ENCODE measurements at regions of chr10 and their contacts with region 1.

Region 1: DNA sequence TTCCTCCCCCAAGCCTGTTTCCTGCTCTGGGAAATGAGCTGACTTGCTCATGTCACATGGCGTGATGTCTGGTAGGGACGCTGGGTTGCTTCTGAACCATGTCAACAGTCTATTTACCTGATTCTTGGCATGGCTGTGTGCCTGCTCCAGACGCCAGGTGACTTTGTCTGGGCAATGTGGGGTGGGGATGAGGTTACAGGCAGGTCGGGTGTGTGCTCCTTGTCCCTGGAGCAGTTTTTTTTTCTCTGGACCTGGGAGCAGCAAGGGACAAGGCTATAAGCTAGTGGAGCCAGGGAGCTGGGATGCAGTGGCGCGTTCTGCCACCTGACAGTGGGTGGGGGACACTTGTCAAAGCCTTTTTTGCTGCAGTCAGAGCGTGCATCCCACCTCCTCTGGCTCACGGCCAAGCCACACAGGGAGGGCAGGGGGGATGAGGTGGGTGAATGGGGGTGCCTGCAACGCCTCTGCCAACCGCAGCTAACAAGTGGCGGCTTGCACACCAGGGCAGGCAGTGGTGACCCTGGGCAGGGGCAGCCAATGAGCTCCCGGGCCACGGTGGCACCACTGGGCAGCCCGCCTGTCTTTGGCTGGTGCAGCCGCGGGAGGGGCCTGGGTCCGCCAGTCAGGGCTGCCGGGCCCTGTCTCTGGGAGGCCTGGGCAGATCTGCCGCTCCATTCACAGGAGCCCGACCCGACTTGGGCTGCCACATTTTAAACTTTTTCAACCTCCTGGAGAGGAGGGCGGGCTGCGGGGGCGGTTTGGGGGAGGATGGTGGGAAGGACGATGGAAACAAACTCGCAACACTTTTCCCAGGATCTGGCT is 22.9 kb downstream of the DNAJB12 start:
- DNase-seq: peak; percentile 94 to 96
- ATAC-seq: peak; percentile 75 to 90 (median 79)
- H3K4me3 ChIP-seq: peak overlapping the region; percentile 14
- H3K4me3 Mint-ChIP-seq: peak overlapping the region; percentile 86
- H3K27ac ChIP-seq: peak overlapping the region; percentile 95
- H3K27ac Mint-ChIP-seq: peak overlapping the region; percentile 96 to 97
- H3K4me1 ChIP-seq: peaks cover 98% of the 10 kb centered on the region
- H3K4me1 Mint-ChIP-seq: peaks cover 79 to 92% of the 10 kb centered on the region in 2 donors
- H3K27me3 ChIP-seq: no peaks in the 10 kb centered on the region
- H3K27me3 Mint-ChIP-seq: no peaks in the 10 kb centered on the region
- CTCF ChIP-seq: no peak

Region 2: GRCh38 chr10:72083790-72084459 is 247.9 kb before region 1 on chr10:
- intact Hi-C with region 1: loop called (anchors 2 kb)
- DNase-seq: peak; percentile 37 to 84
- ATAC-seq: peak; percentile 23 to 29 (median 29)
- H3K4me3 ChIP-seq: no peak overlapping the region
- H3K4me3 Mint-ChIP-seq: peak overlapping the region; percentile 78
- H3K27ac ChIP-seq: peak overlapping the region; percentile 57
- H3K27ac Mint-ChIP-seq: peak overlapping the region; percentile 94 to 96
- H3K4me1 ChIP-seq: peaks cover 88% of the 10 kb centered on the region
- H3K4me1 Mint-ChIP-seq: peaks cover 72 to 80% of the 10 kb centered on the region in 2 donors
- H3K27me3 ChIP-seq: no peaks in the 10 kb centered on the region
- H3K27me3 Mint-ChIP-seq: peaks cover 0 to 3% of the 10 kb centered on the region in 2 donors
- CTCF ChIP-seq: no peak

Region 3: DNA sequence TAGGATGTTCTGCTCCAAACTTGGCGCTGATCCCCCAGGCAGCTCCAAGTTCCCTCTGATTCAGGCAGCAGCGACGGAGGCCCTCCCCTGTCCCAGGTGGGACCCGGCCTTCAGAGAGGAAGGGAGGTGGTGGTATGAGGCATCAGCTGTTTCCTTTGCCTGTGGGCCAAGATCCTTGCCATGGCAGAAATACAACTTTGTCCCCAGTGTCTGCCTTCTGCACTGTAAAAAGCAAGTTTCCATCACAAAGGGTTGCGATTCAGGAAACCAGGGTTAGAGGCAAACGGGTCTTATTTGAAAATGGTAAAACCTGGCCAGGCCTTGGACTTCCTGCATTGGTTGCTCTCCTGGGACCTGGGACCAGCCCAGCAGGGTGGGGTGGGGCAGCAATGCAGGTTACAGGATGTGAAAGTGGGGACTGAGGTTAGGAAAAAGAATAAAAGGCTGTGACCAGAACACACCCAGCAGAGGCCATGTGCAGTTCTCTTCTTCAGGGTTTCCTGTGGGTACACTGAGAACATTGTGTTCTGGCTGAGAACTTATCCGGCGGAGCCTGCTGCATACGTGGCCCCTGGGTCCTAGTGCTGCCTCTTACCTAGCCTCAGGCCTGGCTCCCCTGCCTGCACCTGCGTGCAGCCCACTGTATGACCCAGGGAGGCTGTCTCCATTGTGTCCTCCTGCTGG is 83.2 kb before region 1 on chr10:
- intact Hi-C with region 1: loop called (anchors 1 kb)
- DNase-seq: peak; percentile 58 to 88
- ATAC-seq: peak; percentile 90 to 95 (median 94)
- H3K4me3 ChIP-seq: peak overlapping the region; percentile 26
- H3K4me3 Mint-ChIP-seq: peak overlapping the region; percentile 88
- H3K27ac ChIP-seq: peak overlapping the region; percentile 88
- H3K27ac Mint-ChIP-seq: peak overlapping the region; percentile 88 to 89
- H3K4me1 ChIP-seq: peaks cover 97% of the 10 kb centered on the region
- H3K4me1 Mint-ChIP-seq: peaks cover 69 to 87% of the 10 kb centered on the region in 2 donors
- H3K27me3 ChIP-seq: no peaks in the 10 kb centered on the region
- H3K27me3 Mint-ChIP-seq: no peaks in the 10 kb centered on the region
- CTCF ChIP-seq: no peak

Region 4: DNA sequence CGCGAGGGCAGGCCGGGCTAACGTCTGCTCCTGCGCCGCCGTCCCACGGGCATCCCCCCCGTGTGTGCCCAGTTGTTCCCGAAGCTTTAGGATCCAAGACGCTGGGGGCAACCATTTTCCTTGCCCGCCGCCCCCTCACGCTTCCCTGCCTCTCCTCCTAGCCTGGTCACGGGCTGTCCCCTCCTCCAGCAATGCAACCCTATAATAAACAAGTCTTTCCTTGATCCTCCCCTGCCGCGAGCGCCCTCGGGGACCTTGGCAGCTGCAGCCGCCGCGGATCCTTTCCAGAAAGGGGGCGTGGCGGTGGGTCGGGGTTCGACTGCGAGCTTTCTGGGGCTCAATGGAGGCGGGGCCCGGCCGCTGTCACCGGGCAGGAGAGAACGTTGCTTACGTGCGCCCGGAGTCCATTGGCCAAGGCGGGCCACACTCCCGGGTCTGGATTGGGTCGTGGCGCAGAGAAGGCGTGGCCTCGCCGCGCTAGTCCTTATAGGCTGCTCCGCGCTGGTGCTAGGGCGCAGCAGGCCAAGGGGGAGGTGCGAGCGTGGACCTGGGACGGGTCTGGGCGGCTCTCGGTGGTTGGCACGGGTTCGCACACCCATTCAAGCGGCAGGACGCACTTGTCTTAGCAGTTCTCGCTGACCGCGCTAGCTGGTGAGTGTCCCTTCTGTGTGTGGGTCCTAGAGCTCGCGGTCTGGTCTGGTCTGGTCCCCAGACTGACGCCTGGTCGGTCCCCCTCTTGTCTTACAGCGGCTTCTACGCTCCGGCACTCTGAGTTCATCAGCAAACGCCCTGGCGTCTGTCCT is 58.2 kb before region 1 on chr10 and contains the start of gene DDIT4:
- intact Hi-C with region 1: loop called (anchors 1 kb)
- DNase-seq: peak; percentile 98
- ATAC-seq: peak; percentile 90 to 98 (median 90)
- H3K4me3 ChIP-seq: peak within 1 kb of the TSS; percentile 90
- H3K4me3 Mint-ChIP-seq: peak within 1 kb of the TSS; percentile 99
- H3K27ac ChIP-seq: peak within 1 kb of the TSS; percentile 82
- H3K27ac Mint-ChIP-seq: peak within 1 kb of the TSS; percentile 91 to 94
- H3K4me1 ChIP-seq: peaks cover 48% of the 10 kb centered on the region
- H3K4me1 Mint-ChIP-seq: peaks cover 39 to 64% of the 10 kb centered on the region in 2 donors
- H3K27me3 ChIP-seq: no peaks in the 10 kb centered on the region
- H3K27me3 Mint-ChIP-seq: no peaks in the 10 kb centered on the region
- CTCF ChIP-seq: no peak
- total RNA-seq, gene DDIT4: 174 to 232 (median 200) TPM

Region 5: GRCh38 chr10:72319416-72320254 is 12.2 kb before region 1 on chr10:
- intact Hi-C with region 1: loop called (anchors 1 kb)
- DNase-seq: peak; percentile 89 to 95
- ATAC-seq: peak; percentile 68 to 87 (median 83)
- H3K4me3 ChIP-seq: peak overlapping the region; percentile 37
- H3K4me3 Mint-ChIP-seq: peak overlapping the region; percentile 75
- H3K27ac ChIP-seq: peak overlapping the region; percentile 95
- H3K27ac Mint-ChIP-seq: peak overlapping the region; percentile 85 to 97
- H3K4me1 ChIP-seq: peaks cover 85% of the 10 kb centered on the region
- H3K4me1 Mint-ChIP-seq: peaks cover 52 to 69% of the 10 kb centered on the region in 2 donors
- H3K27me3 ChIP-seq: no peaks in the 10 kb centered on the region
- H3K27me3 Mint-ChIP-seq: no peaks in the 10 kb centered on the region
- CTCF ChIP-seq: no peak

Region 6: DNA sequence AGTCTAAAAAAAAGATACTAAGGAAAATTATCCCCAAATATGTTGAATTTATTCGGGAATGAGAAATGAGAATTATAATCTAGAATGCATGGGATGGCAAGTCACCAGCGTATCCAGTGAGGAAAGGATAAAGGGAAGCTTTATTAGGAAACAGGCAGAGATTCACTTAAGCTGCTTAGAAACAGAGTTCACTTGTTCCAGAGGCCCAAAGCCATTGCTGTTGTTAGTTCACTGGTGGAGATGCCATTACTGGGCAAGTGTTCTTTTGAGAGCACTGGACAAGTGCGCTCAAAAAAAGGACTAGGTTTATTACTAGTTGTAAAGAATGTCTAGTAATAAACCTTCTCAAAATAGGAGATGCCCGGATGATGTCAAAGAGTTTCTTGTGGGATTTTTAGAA is 242.8 kb after region 1 on chr10:
- intact Hi-C with region 1: no loop called
- DNase-seq: no peak
- ATAC-seq: no peak
- H3K4me3 ChIP-seq: no peak overlapping the region
- H3K4me3 Mint-ChIP-seq: no peak overlapping the region
- H3K27ac ChIP-seq: no peak overlapping the region
- H3K27ac Mint-ChIP-seq: no peak overlapping the region
- H3K4me1 ChIP-seq: no peaks in the 10 kb centered on the region
- H3K4me1 Mint-ChIP-seq: peaks cover 5 to 14% of the 10 kb centered on the region in 2 donors
- H3K27me3 ChIP-seq: no peaks in the 10 kb centered on the region
- H3K27me3 Mint-ChIP-seq: no peaks in the 10 kb centered on the region
- CTCF ChIP-seq: no peak

Measured in natural killer cell (primary cell).